WTC11 (cell line): ENCODE measurements at regions of chr19 and their contacts with region 1.

Region 1: DNA sequence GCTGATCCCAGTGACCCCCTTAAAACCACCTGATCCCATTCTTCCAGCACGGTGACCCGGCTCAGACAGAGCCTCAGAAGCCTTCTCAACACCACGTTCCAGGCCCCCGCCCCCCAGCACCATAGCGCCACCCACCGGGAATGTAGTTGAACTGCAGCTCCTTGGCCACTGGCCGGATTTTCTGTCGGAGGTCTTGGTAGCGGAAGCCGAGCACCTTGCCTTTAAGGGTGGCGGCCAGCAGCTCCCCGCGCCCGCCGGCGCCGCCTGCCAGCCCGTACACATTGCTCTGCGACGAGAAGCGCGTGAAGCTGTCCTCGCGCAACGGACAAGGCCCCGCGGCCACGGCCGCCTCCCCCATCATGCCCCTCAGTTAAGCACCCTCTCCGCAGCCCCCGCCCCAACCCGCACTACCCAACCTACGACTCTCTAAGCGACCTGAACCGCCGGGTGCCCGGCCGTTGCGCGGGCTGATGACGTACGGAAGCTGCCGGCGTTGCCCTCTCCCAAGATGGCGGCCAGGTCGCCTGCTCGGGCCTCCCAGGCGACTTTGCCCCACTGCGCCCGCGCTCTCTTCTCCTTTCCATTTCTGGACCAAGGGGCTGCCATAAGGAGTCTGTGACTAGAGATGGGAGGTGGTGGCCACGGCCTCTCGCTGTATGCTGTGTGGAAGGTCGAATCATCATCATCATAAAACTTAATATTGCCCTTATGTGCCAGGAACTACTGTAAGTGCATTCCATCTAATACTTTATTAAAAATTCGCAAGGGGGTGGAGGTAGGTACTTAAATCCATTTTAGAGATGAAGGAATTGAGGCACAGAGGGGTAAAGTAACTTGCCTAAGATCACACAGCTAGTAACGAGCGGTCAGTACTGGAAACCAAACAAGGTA is at the start of gene KPTN:
- DNase-seq: peak; percentile 91
- ATAC-seq: peak; percentile 62
- H3K4me3 Mint-ChIP-seq: peak within 1 kb of the TSS; percentile 96
- H3K27ac Mint-ChIP-seq: peak within 1 kb of the TSS; percentile 98
- H3K4me1 Mint-ChIP-seq: peaks cover 18% of the 10 kb centered on the region
- H3K27me3 Mint-ChIP-seq: peaks cover 9% of the 10 kb centered on the region
- CTCF ChIP-seq: peak; percentile 96
- total RNA-seq, gene KPTN: 24.5 to 30.2 TPM (median 29.5 TPM) in 3 replicates

Region 2: GRCh38 chr19:47398707-47399597 is 85.1 kb before region 1 on chr19:
- CTCF ChIA-PET with region 1: no interaction called
- POLR2A ChIA-PET with region 1: no interaction called
- DNase-seq: peak; percentile 33
- ATAC-seq: peak; percentile 77
- H3K4me3 Mint-ChIP-seq: peak overlapping the region; percentile 13
- H3K27ac Mint-ChIP-seq: peak overlapping the region; percentile 96
- H3K4me1 Mint-ChIP-seq: peaks cover 28% of the 10 kb centered on the region
- H3K27me3 Mint-ChIP-seq: peaks cover under 1% of the 10 kb centered on the region; the same call in 1 of the 2 replicates
- CTCF ChIP-seq: no peak

Region 3: DNA sequence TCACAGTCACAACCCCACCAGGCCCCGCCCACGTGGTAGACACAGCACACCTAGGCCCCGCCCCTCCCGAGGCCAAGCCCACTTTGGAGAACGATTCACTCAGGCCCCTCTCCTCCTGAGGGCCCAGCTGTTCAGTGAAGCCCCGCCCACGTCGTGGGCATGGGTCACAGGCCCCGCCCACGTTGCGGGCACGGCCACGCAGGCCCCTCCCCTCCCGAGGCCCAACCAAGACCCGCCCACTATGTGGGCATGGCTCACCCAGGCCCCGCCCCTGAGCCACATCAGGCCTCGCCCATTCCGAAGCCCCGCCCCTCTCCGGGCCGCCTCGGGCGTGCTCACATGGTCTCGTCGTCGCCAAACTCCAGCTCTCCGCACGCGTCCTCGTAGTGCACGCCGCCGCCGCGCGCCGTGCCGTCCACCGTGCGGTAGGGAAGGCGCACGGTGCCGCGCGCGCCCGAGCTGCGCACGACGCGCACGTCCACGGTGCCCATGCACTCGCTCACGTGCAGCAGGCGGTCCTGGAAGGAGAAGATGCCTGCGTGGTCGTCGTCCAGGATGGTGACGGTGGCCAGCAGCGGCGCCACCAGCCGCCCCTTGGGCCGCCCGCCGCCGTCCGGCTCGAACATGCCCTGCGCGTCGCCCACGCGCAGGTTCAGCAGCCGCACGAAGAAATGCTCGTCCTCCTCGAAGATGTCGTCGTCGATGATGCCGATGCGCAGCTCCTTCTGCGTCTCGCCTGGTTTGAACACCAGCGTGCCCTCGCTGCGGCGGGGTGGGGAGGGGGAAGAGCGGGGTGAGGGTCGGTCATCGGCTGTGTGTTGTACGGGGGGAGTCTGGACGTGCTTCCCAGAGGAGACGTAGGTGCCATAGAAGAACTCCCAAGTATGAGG is 36.3 kb before region 1 on chr19:
- CTCF ChIA-PET with region 1: interaction called, 20 read pairs
- POLR2A ChIA-PET with region 1: interaction called, 5 read pairs
- DNase-seq: peak; percentile 99
- ATAC-seq: peak; percentile 89
- H3K4me3 Mint-ChIP-seq: peak overlapping the region; percentile 79
- H3K27ac Mint-ChIP-seq: peak overlapping the region; percentile 81
- H3K4me1 Mint-ChIP-seq: peaks cover 36% of the 10 kb centered on the region
- H3K27me3 Mint-ChIP-seq: peaks cover 56% of the 10 kb centered on the region
- CTCF ChIP-seq: no peak

Region 4: GRCh38 chr19:47494729-47495128 is 10.7 kb after region 1 on chr19:
- CTCF ChIA-PET with region 1: interaction called, 13 read pairs
- POLR2A ChIA-PET with region 1: no interaction called
- DNase-seq: no peak
- ATAC-seq: no peak
- H3K4me3 Mint-ChIP-seq: no peak overlapping the region
- H3K27ac Mint-ChIP-seq: no peak overlapping the region
- H3K4me1 Mint-ChIP-seq: peaks cover 10% of the 10 kb centered on the region
- H3K27me3 Mint-ChIP-seq: no peaks in the 10 kb centered on the region
- CTCF ChIP-seq: no peak

Region 5: GRCh38 chr19:47514869-47515588 is 31.0 kb after region 1 on chr19 and contains the start of gene NAPA:
- CTCF ChIA-PET with region 1: interaction called, 19 read pairs
- POLR2A ChIA-PET with region 1: no interaction called
- DNase-seq: peak; percentile 100
- ATAC-seq: peak; percentile 96
- H3K4me3 Mint-ChIP-seq: peak within 1 kb of the TSS; percentile 97
- H3K27ac Mint-ChIP-seq: peak within 1 kb of the TSS; percentile 96
- H3K4me1 Mint-ChIP-seq: peaks cover 30% of the 10 kb centered on the region
- H3K27me3 Mint-ChIP-seq: no peaks in the 10 kb centered on the region
- CTCF ChIP-seq: 0 out of 2 replicates have a peak, but pooled peaks have one; percentile 93
- total RNA-seq, gene NAPA: 58.4 to 66.8 TPM (median 61.3 TPM) in 3 replicates

Region 6: GRCh38 chr19:47707135-47707925 is 223.3 kb after region 1 on chr19:
- CTCF ChIA-PET with region 1: interaction called, 10 read pairs
- POLR2A ChIA-PET with region 1: interaction called, 4 read pairs
- DNase-seq: peak; percentile 92
- ATAC-seq: peak; percentile 96
- H3K4me3 Mint-ChIP-seq: no peak overlapping the region; the same call in 1 of the 2 replicates
- H3K27ac Mint-ChIP-seq: no peak overlapping the region
- H3K4me1 Mint-ChIP-seq: 0 out of 2 replicates have a peak, but pooled peaks cover 2% of the 10 kb centered on the region
- H3K27me3 Mint-ChIP-seq: peaks cover 5% of the 10 kb centered on the region
- CTCF ChIP-seq: peak; percentile 71